ENCODE measurements at regions of chr2 and their contacts with region 1.

Region 1: GRCh38 chr2:70070541-70071268 is 16.6 kb upstream of the PCBP1 start:
- DNase-seq: peak; percentile 81
- ATAC-seq: peak; percentile 80
- H3K4me3 Mint-ChIP-seq: peak overlapping the region; percentile 57
- H3K27ac Mint-ChIP-seq: peak overlapping the region; percentile 87
- H3K4me1 Mint-ChIP-seq: peaks cover 47% of the 10 kb centered on the region
- H3K27me3 Mint-ChIP-seq: no peaks in the 10 kb centered on the region

Region 2: DNA sequence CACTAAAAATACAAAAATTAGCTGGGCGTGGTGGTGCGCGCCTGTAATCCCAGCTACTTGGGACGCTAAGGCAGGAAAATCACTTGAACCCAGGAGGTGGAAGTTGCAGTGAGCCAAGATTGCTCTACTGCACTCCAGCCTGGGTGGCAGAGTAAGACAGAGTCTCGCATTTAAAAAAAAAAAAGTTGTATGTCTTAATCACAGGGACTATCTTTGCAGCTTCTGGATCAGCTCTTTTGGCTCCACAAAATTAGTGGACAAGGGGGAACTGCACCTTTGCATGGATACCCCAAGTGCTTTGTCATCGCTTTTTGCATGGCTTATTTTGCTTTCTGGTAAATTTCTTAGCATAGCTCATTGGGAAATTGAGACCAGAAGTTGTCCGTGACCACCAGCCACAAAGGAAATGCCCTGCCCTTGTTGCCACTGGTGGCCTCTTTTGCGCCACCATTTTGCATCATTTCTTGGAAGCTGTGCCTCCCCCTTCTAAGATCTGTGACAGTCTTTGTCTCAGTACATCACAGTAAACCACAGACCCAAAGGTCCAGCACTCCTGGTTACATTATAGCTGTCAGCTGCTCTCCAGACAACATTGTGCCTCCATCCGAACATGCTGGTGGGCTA is 27.3 kb before region 1 on chr2:
- CTCF ChIA-PET with region 1: interaction called, 11 read pairs
- POLR2A ChIA-PET with region 1: interaction called, 4 read pairs
- DNase-seq: peak; percentile 79
- ATAC-seq: peak; percentile 77
- H3K4me3 Mint-ChIP-seq: peak overlapping the region; percentile 59
- H3K27ac Mint-ChIP-seq: peak overlapping the region; percentile 86
- H3K4me1 Mint-ChIP-seq: peaks cover 69% of the 10 kb centered on the region
- H3K27me3 Mint-ChIP-seq: no peaks in the 10 kb centered on the region

Measured in activated CD8-positive, alpha-beta T cell treated with anti-CD3 and anti-CD28 coated beads, Interleukin-2, amount 10 ng/mL, durations not matched to agents 7 days and 5 days (primary cell).